ENCODE measurements at regions of chr6 and their contacts with region 1.

Region 1: GRCh38 chr6:41787219-41787917 is at the start of gene TOMM6:
- DNase-seq: peak; percentile 87 to 96 (median 94)
- ATAC-seq: peak; percentile 88
- H3K4me3 ChIP-seq: peak within 1 kb of the TSS; percentile 97
- H3K4me3 Mint-ChIP-seq: peak within 1 kb of the TSS; percentile 91 to 99 (median 97)
- H3K27ac ChIP-seq: peak within 1 kb of the TSS; percentile 89
- H3K27ac Mint-ChIP-seq: peak within 1 kb of the TSS; percentile 95 to 99 (median 98)
- H3K4me1 ChIP-seq: peaks cover 6 to 9% of the 10 kb centered on the region in 2 donors
- H3K4me1 Mint-ChIP-seq: peaks cover 8 to 29% (median 17%) of the 10 kb centered on the region in 7 donors
- H3K27me3 ChIP-seq: no peaks in the 10 kb centered on the region
- H3K27me3 Mint-ChIP-seq: peaks cover 0 to 14% (median 0%) of the 10 kb centered on the region in 5 donors
- total RNA-seq, gene TOMM6: 114 to 193 (median 128) TPM

Region 2: GRCh38 chr6:41072676-41073623 is 714.4 kb before region 1 on chr6 and contains the start of gene NFYA:
- CTCF ChIA-PET with region 1: no interaction called
- POLR2A ChIA-PET with region 1: interaction called, 3 read pairs
- intact Hi-C with region 1: loop called (anchors 1 to 2 kb)
- DNase-seq: peak; percentile 99 to 100 (median 100)
- ATAC-seq: peak; percentile 80
- H3K4me3 ChIP-seq: peak within 1 kb of the TSS; percentile 78
- H3K4me3 Mint-ChIP-seq: peak within 1 kb of the TSS; percentile 90 to 98 (median 96)
- H3K27ac ChIP-seq: peak within 1 kb of the TSS; percentile 95
- H3K27ac Mint-ChIP-seq: peak within 1 kb of the TSS; percentile 95 to 99 (median 97)
- H3K4me1 ChIP-seq: peaks cover 30% of the 10 kb centered on the region in 2 donors
- H3K4me1 Mint-ChIP-seq: peaks cover 39 to 66% (median 59%) of the 10 kb centered on the region in 7 donors
- H3K27me3 ChIP-seq: no peaks in the 10 kb centered on the region
- H3K27me3 Mint-ChIP-seq: peaks cover 0 to 5% (median 0%) of the 10 kb centered on the region in 5 donors
- total RNA-seq, gene NFYA: 31.6 to 63.3 (median 35.9) TPM

Region 3: GRCh38 chr6:41735427-41736356 is 51.7 kb before region 1 on chr6 and contains the start of gene TFEB:
- CTCF ChIA-PET with region 1: interaction called, 12 read pairs
- POLR2A ChIA-PET with region 1: interaction called, 17 read pairs
- intact Hi-C with region 1: loop called (anchors 1 kb)
- DNase-seq: peak; percentile 88 to 98 (median 93)
- ATAC-seq: peak; percentile 87
- H3K4me3 ChIP-seq: peak within 1 kb of the TSS; percentile 57
- H3K4me3 Mint-ChIP-seq: peak within 1 kb of the TSS; percentile 66 to 89 (median 80)
- H3K27ac ChIP-seq: peak within 1 kb of the TSS; percentile 80
- H3K27ac Mint-ChIP-seq: peak within 1 kb of the TSS in 8 of 9 donors; percentile 34 to 84 (median 62)
- H3K4me1 ChIP-seq: peaks cover 32 to 37% of the 10 kb centered on the region in 2 donors
- H3K4me1 Mint-ChIP-seq: peaks cover 13 to 32% (median 24%) of the 10 kb centered on the region in 7 donors
- H3K27me3 ChIP-seq: no peaks in the 10 kb centered on the region
- H3K27me3 Mint-ChIP-seq: no peaks in the 10 kb centered on the region
- total RNA-seq, gene TFEB: 7.4 to 39.9 (median 11.8) TPM

Region 4: GRCh38 chr6:41936073-41936837 is 148.9 kb after region 1 on chr6:
- CTCF ChIA-PET with region 1: interaction called, 5 read pairs
- POLR2A ChIA-PET with region 1: interaction called, 3 read pairs
- intact Hi-C with region 1: loop called (anchors 1 to 5 kb)
- DNase-seq: peak in 8 of 9 donors; percentile 52 to 72 (median 63)
- ATAC-seq: peak; percentile 79
- H3K4me3 ChIP-seq: peak overlapping the region; percentile 34
- H3K4me3 Mint-ChIP-seq: peak overlapping the region; percentile 64 to 100 (median 90)
- H3K27ac ChIP-seq: peak overlapping the region; percentile 76
- H3K27ac Mint-ChIP-seq: peak overlapping the region; percentile 85 to 95 (median 90)
- H3K4me1 ChIP-seq: peaks cover 57 to 61% of the 10 kb centered on the region in 2 donors
- H3K4me1 Mint-ChIP-seq: peaks cover 48 to 81% (median 74%) of the 10 kb centered on the region in 7 donors
- H3K27me3 ChIP-seq: no peaks in the 10 kb centered on the region
- H3K27me3 Mint-ChIP-seq: no peaks in the 10 kb centered on the region

Region 5: DNA sequence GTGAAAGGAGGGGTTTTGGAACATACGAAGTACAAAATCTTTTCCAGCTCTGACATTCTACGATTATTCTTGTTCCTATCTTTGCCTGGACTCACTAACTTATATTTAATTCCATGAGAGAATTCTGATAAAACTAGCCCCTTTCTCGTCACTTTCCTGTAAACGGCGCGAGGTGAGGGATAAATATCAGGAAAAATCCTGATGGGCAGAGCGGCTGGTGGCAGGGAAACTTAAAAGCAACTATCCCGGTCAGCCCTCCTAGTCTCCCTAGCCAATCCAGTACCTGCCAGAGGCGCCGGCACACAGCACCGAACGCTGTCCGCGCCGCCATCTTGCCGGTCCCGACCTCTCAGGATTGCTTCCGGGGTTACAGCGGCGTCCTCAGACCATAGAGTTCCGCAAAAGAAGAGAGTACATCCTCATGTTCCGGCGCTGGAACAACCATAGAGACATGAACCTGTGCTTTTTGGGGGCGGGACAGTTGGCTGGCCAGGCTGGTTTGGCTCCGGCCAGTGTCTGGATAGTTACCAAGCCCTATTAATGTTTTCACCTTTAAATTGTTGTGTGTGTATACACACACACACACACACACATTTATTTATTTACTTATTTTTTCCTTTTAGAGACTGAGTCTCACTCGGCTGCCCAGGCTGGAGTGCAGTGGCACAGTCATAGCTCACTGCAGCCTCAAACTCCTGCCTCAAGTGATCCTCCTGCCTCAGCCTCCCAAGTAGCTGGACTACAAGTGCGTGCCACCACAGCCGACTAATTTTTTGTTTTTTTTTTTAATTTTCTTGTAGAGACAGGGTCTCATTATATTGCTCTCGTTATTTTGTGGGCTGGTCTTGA is 430.4 kb after region 1 on chr6 and contains the start of gene MRPS10:
- CTCF ChIA-PET with region 1: interaction called, 7 read pairs
- POLR2A ChIA-PET with region 1: interaction called, 8 read pairs
- intact Hi-C with region 1: loop called (anchors 1 to 2 kb)
- DNase-seq: peak; percentile 72 to 92 (median 87)
- ATAC-seq: peak; percentile 100
- H3K4me3 ChIP-seq: peak within 1 kb of the TSS; percentile 96
- H3K4me3 Mint-ChIP-seq: peak within 1 kb of the TSS; percentile 92 to 100 (median 98)
- H3K27ac ChIP-seq: peak within 1 kb of the TSS; percentile 77
- H3K27ac Mint-ChIP-seq: peak within 1 kb of the TSS; percentile 87 to 99 (median 97)
- H3K4me1 ChIP-seq: peaks cover 9 to 14% of the 10 kb centered on the region in 2 donors
- H3K4me1 Mint-ChIP-seq: peaks cover 7 to 34% (median 24%) of the 10 kb centered on the region in 7 donors
- H3K27me3 ChIP-seq: no peaks in the 10 kb centered on the region
- H3K27me3 Mint-ChIP-seq: no peaks in the 10 kb centered on the region
- total RNA-seq, gene MRPS10: 17.0 to 30.3 (median 25.3) TPM

Region 6: DNA sequence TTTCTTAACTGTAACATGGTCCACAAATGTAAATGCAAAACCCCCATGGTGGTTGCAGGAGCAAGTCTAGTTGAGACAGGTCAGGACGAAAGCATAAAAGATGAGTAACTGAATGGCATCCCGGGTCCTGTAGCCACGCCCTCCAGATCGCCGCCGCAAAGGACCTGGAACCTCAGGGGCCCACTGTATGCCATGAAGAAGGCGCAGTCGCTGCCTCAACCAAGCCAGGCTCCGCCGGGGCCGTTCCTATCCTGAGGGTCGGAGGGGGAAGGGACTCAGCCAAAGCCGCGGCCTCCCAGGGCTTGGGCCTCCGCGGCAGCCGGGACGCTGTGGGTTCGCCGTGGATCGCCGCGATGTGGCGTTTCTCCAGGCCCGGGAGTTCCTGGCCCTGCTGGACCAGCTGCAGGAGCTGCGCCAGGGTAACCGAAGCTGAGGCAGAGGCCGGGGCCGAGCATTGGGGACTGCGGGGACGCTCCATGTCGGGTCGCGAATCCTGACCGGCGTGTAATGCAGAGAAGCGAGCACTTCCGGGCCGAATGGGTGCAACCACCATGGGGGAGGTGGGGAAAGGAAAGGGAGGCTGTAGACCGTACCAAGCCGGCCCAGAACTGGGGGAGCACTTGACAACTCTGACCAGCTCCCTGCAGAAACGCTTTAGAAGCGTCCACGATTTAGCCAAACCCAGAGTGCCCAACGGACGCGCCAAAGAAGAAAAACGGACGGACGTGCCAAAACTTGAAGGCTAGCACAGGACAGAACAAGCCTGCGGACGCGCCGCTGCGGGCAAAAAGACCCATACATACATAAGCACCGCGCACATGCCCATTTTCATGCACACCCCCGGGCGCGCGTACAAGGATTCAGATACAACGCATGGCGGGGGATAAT is 1103.2 kb after region 1 on chr6:
- CTCF ChIA-PET with region 1: no interaction called
- POLR2A ChIA-PET with region 1: no interaction called
- intact Hi-C with region 1: loop called in 1 of 2 experiments (anchors 10 kb)
- DNase-seq: peak; percentile 70 to 90 (median 87)
- ATAC-seq: peak; percentile 99
- H3K4me3 ChIP-seq: peak overlapping the region; percentile 89
- H3K4me3 Mint-ChIP-seq: peak overlapping the region; percentile 94 to 100 (median 98)
- H3K27ac ChIP-seq: peak overlapping the region; percentile 87
- H3K27ac Mint-ChIP-seq: peak overlapping the region; percentile 89 to 99 (median 98)
- H3K4me1 ChIP-seq: peaks cover 0 to 8% of the 10 kb centered on the region in 2 donors
- H3K4me1 Mint-ChIP-seq: peaks cover 0 to 26% (median 14%) of the 10 kb centered on the region in 7 donors
- H3K27me3 ChIP-seq: no peaks in the 10 kb centered on the region
- H3K27me3 Mint-ChIP-seq: no peaks in the 10 kb centered on the region

Region 7: DNA sequence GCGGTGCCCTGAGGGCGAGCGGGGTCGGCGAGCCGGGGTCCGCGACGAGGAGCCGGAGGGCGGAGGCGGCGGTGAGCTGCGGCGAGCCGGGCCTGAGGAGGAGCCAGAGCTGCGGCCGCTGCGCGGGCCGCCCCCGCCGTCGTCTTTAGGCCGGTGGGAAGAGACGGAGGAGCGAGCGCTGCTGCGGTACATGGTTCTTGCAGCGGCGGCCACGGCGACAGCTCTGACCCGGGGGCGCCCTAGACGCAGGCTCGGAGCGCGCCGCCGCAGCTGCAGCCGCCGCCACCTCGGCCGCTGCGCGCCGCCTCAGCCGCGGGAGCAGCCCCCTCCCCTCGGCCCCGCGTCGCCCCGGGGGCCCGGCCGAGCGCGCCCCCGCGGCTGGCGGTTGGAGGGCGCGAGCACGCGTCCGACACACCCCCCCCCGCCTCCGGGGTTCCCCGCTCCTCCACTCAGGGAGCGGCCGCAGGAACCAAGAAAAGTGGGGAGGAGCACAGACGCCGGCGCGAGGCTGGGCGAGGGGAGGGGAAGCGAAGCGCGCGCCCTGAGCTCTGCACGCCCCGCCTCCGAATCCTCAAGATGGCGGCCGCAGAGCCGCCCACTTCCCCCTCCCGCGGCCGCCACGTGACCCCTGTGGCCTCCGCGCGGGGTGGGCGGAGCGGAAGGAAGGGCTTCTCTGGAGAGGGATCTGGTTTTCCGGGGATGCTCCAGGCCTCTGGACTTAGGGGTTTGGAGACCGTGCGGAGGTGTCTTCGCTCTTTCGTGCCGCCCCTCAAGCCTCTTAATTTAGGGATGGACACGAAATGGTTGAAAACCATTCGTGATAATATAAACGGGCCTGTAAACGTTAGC is 1582.0 kb after region 1 on chr6 and contains the start of gene ZNF318:
- CTCF ChIA-PET with region 1: no interaction called
- POLR2A ChIA-PET with region 1: no interaction called
- intact Hi-C with region 1: loop called in 1 of 2 experiments (anchors 1 kb)
- DNase-seq: peak; percentile 85 to 95 (median 93)
- ATAC-seq: peak; percentile 97
- H3K4me3 ChIP-seq: peak within 1 kb of the TSS; percentile 90
- H3K4me3 Mint-ChIP-seq: peak within 1 kb of the TSS; percentile 75 to 97 (median 92)
- H3K27ac ChIP-seq: peak within 1 kb of the TSS; percentile 87
- H3K27ac Mint-ChIP-seq: peak within 1 kb of the TSS; percentile 91 to 98 (median 95)
- H3K4me1 ChIP-seq: peaks cover 20 to 23% of the 10 kb centered on the region in 2 donors
- H3K4me1 Mint-ChIP-seq: peaks cover 28 to 56% (median 50%) of the 10 kb centered on the region in 7 donors
- H3K27me3 ChIP-seq: no peaks in the 10 kb centered on the region
- H3K27me3 Mint-ChIP-seq: peaks cover 0 to 17% (median 0%) of the 10 kb centered on the region in 5 donors
- total RNA-seq, gene ZNF318: 15.8 to 40.2 (median 28.3) TPM